Activated B cell treated with CpG ODN at 0.5 μM for 24 hours (primary cell): ENCODE measurements at regions of chr14 and their contacts with region 1.

Region 1: DNA sequence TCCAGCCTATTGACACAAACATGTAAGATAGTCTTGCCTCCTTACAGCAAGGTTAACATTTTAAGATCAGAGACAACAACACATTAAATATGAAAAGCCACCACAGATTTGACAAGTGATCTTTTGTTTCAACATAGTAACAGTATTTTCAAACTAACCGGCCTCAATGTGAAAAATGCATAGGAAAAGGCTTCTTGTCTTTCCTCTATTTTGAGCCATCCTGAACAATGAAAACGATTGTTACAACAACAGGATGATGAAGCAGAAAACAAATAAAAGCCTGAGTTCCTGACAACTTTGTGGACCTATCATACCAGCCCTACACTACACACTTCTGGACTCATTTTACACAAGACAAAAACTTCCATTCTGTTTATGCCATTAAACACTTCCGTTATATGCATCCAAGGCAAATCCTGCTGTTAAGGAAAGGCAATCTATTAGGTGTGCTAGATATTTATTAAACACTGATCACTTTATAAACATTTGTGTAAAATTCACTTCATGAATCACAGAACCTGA is 37.3 kb downstream of the BAZ1A start:
- DNase-seq: no peak
- ATAC-seq: no peak
- H3K4me3 Mint-ChIP-seq: no peak overlapping the region
- H3K27ac Mint-ChIP-seq: no peak overlapping the region
- H3K4me1 Mint-ChIP-seq: peaks cover 28% of the 10 kb centered on the region
- H3K27me3 Mint-ChIP-seq: no peaks in the 10 kb centered on the region
- CTCF ChIP-seq: no peak

Region 2: GRCh38 chr14:34853041-34853440 is 15.2 kb after region 1 on chr14:
- CTCF ChIA-PET with region 1: no interaction called
- POLR2A ChIA-PET with region 1: no interaction called
- intact Hi-C with region 1: loop called (anchors 2 kb)
- DNase-seq: no peak
- ATAC-seq: no peak
- H3K4me3 Mint-ChIP-seq: no peak overlapping the region
- H3K27ac Mint-ChIP-seq: peak overlapping the region; percentile 14
- H3K4me1 Mint-ChIP-seq: peaks cover 10% of the 10 kb centered on the region
- H3K27me3 Mint-ChIP-seq: no peaks in the 10 kb centered on the region
- CTCF ChIP-seq: no peak

Region 3: DNA sequence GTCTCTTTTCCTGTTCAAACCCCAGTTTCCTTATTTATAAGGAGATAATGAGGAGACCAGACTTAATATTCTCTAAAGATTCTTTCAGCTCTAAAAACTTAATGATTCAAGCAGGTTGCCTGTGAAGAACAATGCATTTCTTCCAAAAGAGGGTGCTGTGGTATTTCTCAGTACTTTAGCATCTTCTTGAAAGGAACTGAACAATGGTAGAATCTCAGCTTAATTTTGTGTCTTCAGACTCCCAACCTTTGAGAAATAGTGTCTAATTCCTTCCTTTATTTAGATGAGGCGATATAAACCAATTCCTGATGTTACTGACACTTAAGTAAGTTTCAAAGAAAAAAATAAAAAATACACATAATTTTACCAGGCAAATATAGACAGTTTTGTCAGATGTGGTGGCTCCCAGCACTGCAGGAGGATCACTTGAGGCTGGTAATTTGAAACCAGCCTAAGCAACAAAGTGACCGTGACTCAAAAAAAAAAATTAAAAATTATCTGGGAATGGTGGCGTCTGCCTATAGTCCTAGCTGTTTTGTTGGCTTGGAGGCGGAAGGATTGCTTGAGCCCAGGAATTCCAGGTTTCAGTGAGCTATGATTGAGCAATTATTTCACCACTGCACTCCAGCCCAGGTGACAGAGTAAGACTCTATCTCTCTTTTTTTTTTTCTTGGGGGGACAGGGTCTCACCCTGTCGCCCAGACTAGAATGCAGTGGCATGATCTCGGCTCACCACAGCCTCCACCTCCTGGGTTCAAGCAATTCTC is 377.4 kb after region 1 on chr14:
- CTCF ChIA-PET with region 1: no interaction called
- POLR2A ChIA-PET with region 1: no interaction called
- intact Hi-C with region 1: no loop called
- DNase-seq: no peak
- ATAC-seq: no peak
- H3K4me3 Mint-ChIP-seq: no peak overlapping the region
- H3K27ac Mint-ChIP-seq: no peak overlapping the region
- H3K4me1 Mint-ChIP-seq: no peaks in the 10 kb centered on the region
- H3K27me3 Mint-ChIP-seq: no peaks in the 10 kb centered on the region
- CTCF ChIP-seq: no peak